ENCODE measurements at regions of chr3 and their contacts with region 1.

Region 1: DNA sequence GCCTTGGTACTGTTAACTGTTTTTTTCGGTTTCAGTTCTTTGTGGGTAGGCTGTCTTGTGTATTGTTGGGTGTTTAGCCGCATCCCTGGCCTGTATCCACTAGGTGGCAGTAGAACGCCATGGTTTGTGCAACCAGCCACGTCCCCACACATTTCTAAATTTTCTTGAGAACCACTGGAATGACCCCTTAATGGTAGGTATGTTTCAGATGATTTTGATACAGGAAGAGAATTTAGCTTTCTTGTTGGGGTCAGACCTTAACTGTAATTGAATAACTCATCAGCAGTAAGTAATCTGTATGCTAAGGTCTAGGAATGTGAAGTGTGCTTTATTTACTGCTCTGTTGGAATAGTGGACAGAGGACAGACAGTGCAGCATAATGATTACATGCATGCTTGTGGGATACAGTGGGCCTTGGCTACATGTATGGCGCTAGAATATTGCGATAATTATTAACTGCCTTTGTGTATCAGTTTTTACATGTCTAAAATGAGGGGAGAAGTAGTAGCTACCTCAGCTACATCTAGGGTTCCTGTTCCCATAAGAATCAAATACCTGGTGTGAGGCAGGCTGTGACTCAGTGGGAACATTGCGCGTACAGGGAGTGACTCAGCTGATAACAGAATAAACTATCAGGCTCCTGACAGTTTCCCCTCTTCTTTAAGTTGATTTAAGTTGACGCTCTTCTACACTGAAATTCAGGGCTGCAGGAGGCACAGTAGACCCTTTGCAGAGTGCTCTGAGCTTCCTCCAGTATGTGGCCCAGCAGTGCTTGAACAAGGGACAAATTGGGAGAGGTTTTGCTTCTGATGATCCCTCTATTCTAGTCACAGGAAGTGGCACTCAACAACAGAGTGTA is 25.0 kb upstream of the GPR171 start:
- DNase-seq: peak; percentile 33 to 84
- H3K4me3 ChIP-seq: no peak overlapping the region
- H3K27ac ChIP-seq: no peak overlapping the region
- H3K4me1 ChIP-seq: peaks cover 0 to 19% (median 9%) of the 10 kb centered on the region in 4 experiments; a peak in 4 of 7 replicates
- H3K27me3 ChIP-seq: no peaks in the 10 kb centered on the region
- CTCF ChIP-seq: peak; percentile 79 to 89 (median 85)
- EP300 ChIP-seq: no peak
- POLR2A ChIP-seq: no peak
- RAD21 ChIP-seq: peak; percentile 96 to 99

Region 2: GRCh38 chr3:151168269-151169094 is 59.6 kb before region 1 on chr3:
- CTCF ChIA-PET with region 1: interaction called, 32 read pairs
- POLR2A ChIA-PET with region 1: no interaction called
- DNase-seq: peak; percentile 34 to 81
- H3K4me3 ChIP-seq: no peak overlapping the region
- H3K27ac ChIP-seq: no peak overlapping the region
- H3K4me1 ChIP-seq: peaks cover 0 to 6% (median 0%) of the 10 kb centered on the region in 4 experiments; a peak in 2 of 7 replicates
- H3K27me3 ChIP-seq: no peaks in the 10 kb centered on the region
- CTCF ChIP-seq: peak; percentile 83 to 86 (median 85)
- EP300 ChIP-seq: no peak
- POLR2A ChIP-seq: no peak
- RAD21 ChIP-seq: peak; percentile 84 to 87

Region 3: DNA sequence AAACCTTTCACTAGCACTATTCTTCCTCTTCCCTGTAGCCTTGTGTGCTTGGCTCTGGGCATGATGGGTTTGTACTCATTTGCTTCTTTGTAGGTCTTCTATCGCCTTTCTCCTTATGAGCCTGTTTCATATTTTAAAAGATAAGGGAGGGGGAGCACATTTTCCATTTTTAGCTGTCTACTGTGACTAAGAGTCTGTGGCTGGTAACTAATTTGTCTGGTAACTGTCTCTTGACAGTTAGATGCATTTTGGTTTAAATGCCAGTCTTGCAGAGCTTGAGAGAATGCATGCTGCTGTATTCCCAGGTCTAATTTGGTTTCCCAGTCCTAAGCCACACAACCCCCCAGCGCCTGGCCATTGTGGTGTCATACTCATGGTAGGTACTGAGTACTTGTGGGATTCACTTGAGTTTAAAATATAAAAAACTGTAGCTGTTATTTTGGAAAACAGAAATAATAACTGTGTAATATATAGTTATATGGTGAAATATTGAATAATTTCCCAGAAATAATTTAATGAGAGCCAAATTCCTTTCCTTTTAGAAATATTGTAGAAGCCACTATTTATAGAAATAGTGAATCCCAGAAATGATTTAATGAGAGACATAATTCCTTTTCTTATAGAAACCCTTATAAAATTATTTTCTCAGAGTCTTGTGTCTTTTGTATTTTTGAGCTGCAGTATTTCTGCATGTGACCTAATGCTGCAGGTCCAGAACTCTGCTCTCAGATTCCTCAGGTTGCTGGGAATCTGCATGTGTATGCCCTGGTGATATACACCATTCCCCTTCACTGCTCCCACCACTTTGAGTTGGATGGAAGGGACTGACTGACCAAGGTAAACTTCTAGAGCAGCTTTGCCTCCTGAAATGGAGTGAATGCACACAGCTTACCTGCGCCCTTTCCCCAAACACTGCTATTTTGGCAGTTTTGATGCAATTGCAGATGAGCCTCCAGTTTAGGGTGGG is 11.1 kb before region 1 on chr3:
- CTCF ChIA-PET with region 1: interaction called, 32 read pairs
- POLR2A ChIA-PET with region 1: no interaction called
- DNase-seq: no peak
- H3K4me3 ChIP-seq: no peak overlapping the region
- H3K27ac ChIP-seq: no peak overlapping the region
- H3K4me1 ChIP-seq: peaks cover 0 to 7% (median 5%) of the 10 kb centered on the region in 4 experiments; a peak in 4 of 7 replicates
- H3K27me3 ChIP-seq: no peaks in the 10 kb centered on the region
- CTCF ChIP-seq: no peak
- EP300 ChIP-seq: no peak
- POLR2A ChIP-seq: no peak
- RAD21 ChIP-seq: no peak

Region 4: GRCh38 chr3:151265866-151266265 is 37.8 kb after region 1 on chr3:
- CTCF ChIA-PET with region 1: interaction called, 32 read pairs
- POLR2A ChIA-PET with region 1: no interaction called
- DNase-seq: peak in 1 of 2 experiments; percentile 17
- H3K4me3 ChIP-seq: no peak overlapping the region
- H3K27ac ChIP-seq: peak overlapping the region; percentile 61; the same call in 1 of the 2 replicates
- H3K4me1 ChIP-seq: peaks cover 0 to 7% (median 3%) of the 10 kb centered on the region in 4 experiments; a peak in 2 of 7 replicates
- H3K27me3 ChIP-seq: no peaks in the 10 kb centered on the region
- CTCF ChIP-seq: no peak
- EP300 ChIP-seq: 0 out of 3 replicates have a peak, but pooled peaks of 1 of the 2 experiments have one; percentile 9
- POLR2A ChIP-seq: no peak
- RAD21 ChIP-seq: no peak

Region 5: DNA sequence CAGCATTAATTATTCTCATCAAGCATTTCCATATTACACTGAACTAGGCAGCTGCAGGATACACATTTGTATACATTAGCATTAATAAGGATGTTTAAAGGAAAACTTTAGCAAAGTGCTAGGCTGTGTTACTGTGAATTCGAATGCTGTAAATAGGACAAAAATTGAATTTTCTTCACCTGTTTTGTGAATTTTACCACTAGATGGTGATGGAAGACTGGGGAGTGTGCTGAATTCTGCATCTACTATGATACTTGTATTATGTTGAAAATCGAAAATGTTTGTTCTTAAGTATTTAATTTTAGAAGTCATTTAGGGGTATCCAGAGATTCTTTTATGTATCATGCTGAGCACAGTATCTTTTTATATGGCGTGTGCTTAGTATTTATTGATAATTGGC is 62.6 kb after region 1 on chr3:
- CTCF ChIA-PET with region 1: interaction called, 60 read pairs
- POLR2A ChIA-PET with region 1: no interaction called
- DNase-seq: no peak
- H3K4me3 ChIP-seq: no peak overlapping the region
- H3K27ac ChIP-seq: no peak overlapping the region
- H3K4me1 ChIP-seq: no peaks in the 10 kb centered on the region; a peak in 1 of 7 replicates
- H3K27me3 ChIP-seq: no peaks in the 10 kb centered on the region
- CTCF ChIP-seq: peak in 2 of 3 experiments; percentile 12 to 17; a peak in 2 of 4 replicates
- EP300 ChIP-seq: no peak
- POLR2A ChIP-seq: no peak
- RAD21 ChIP-seq: peak; percentile 62 to 70

Measured in H1 (cell line).